ENCODE measurements at regions of chr22 and their contacts with region 1.

Region 1: DNA sequence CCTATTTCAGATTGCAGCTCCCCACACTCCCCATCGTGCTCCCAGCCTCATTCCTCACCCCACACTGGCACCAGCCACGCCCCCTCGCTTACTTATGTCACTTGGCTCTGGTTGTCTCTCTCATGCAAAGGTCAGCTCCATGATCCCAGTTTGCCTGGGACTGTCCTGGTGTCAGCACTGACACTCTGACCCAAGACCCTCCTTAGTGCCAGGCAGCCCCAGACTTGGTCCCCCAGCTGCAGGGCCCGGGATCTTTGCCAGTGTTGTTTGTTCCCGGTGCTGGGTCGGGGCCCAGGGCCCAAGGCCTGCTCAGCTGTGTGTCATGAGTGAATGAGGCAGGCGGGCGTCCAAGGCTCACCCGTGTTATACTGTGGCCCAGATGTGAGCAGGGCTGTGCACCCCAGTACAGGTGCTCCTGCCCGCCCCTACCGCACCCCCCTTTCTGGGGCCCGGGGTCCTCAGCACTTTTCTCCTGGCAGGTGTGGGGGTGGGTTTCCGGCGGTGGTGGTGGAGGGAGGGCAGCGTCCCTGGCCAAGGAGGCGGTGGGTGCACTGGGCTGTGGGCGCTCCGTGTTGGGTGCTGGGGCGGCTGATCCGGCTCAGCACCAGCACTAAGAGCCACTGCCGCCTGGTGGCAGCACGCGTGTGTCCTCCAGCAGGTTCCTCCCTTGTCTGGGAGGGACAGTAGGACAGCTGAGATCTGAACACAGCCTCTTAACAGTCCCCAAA is 19.5 kb downstream of the IL17REL start:
- DNase-seq: peak; percentile 44 to 80 (median 50)
- H3K4me3 ChIP-seq: no peak overlapping the region
- H3K4me3 Mint-ChIP-seq: peak overlapping the region in 1 of 7 donors; percentile 73
- H3K27ac ChIP-seq: no peak overlapping the region
- H3K27ac Mint-ChIP-seq: peak overlapping the region in 3 of 8 donors; percentile 43 to 63 (median 47)
- H3K4me1 ChIP-seq: no peaks in the 10 kb centered on the region
- H3K4me1 Mint-ChIP-seq: peaks cover 3 to 6% (median 6%) of the 10 kb centered on the region in 3 donors
- H3K27me3 ChIP-seq: no peaks in the 10 kb centered on the region
- H3K27me3 Mint-ChIP-seq: peaks cover 6 to 7% of the 10 kb centered on the region in 2 donors

Region 2: DNA sequence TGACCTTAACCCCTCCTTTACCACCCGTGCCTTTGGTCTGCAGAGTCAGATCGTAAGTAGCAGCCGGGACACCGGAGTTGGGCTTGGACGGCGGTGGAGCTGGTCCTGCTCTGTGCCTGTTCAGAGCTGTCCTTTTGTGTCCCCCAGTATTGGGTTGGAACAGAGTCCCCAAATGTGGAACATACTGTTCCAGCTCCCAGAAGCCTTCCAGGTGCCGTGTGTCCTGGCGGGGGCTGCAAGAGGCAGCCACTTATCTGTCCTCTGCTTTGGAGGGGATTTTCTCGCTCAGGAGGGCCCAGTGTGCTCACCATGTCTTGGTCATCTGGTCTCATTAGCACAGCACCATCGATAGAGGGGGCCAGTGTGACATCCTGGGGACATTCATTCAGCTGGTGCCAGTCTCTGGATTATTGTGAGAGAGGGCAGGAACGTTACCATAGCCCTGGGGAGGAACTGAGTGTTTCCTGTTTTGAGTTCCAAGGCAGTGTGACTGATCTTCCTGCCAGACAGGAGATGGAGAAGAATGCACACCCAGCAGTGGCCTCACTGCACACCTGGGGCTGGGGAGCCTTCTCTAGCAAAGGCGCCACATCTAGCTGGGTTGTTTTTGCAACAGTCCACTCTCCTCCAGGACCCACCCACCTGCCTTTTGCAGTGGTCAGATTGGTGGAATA is 62.2 kb before region 1 on chr22:
- CTCF ChIA-PET with region 1: interaction called, 22 read pairs
- POLR2A ChIA-PET with region 1: no interaction called
- DNase-seq: peak in 1 of 5 donors; percentile 29
- H3K4me3 ChIP-seq: no peak overlapping the region
- H3K4me3 Mint-ChIP-seq: peak overlapping the region in 4 of 7 donors; percentile 3 to 43 (median 10)
- H3K27ac ChIP-seq: no peak overlapping the region
- H3K27ac Mint-ChIP-seq: peak overlapping the region; percentile 29 to 88 (median 70)
- H3K4me1 ChIP-seq: peaks cover 32% of the 10 kb centered on the region
- H3K4me1 Mint-ChIP-seq: peaks cover 19 to 39% (median 25%) of the 10 kb centered on the region in 3 donors
- H3K27me3 ChIP-seq: no peaks in the 10 kb centered on the region
- H3K27me3 Mint-ChIP-seq: no peaks in the 10 kb centered on the region

Measured in CD8-positive, alpha-beta memory T cell (primary cell).